Activated CD8-positive, alpha-beta T cell treated with anti-CD3 and anti-CD28 coated beads for 36 hours (primary cell): ENCODE measurements at regions of chr3 and their contacts with region 1.

Region 1: GRCh38 chr3:187150599-187150998 is 11.3 kb upstream of the RPL39L start:
- DNase-seq: peak; percentile 85
- ATAC-seq: peak; percentile 86
- H3K4me3 Mint-ChIP-seq: no peak overlapping the region
- H3K27ac Mint-ChIP-seq: no peak overlapping the region
- H3K4me1 Mint-ChIP-seq: no peaks in the 10 kb centered on the region
- H3K27me3 Mint-ChIP-seq: no peaks in the 10 kb centered on the region
- CTCF ChIP-seq: peak; percentile 55

Region 2: GRCh38 chr3:186849374-186849975 is 301.1 kb before region 1 on chr3:
- CTCF ChIA-PET with region 1: interaction called, 20 read pairs
- POLR2A ChIA-PET with region 1: no interaction called
- intact Hi-C with region 1: no loop called
- DNase-seq: peak; percentile 32
- ATAC-seq: peak; percentile 95
- H3K4me3 Mint-ChIP-seq: no peak overlapping the region
- H3K27ac Mint-ChIP-seq: no peak overlapping the region
- H3K4me1 Mint-ChIP-seq: peaks cover 8% of the 10 kb centered on the region
- H3K27me3 Mint-ChIP-seq: peaks cover 9% of the 10 kb centered on the region
- CTCF ChIP-seq: peak; percentile 47

Region 3: GRCh38 chr3:187112934-187113793 is 37.4 kb before region 1 on chr3:
- CTCF ChIA-PET with region 1: interaction called, 116 read pairs
- POLR2A ChIA-PET with region 1: interaction called, 7 read pairs
- intact Hi-C with region 1: loop called (anchors 5 kb)
- DNase-seq: no peak
- ATAC-seq: peak; percentile 66
- H3K4me3 Mint-ChIP-seq: no peak overlapping the region
- H3K27ac Mint-ChIP-seq: no peak overlapping the region
- H3K4me1 Mint-ChIP-seq: peaks cover 7% of the 10 kb centered on the region
- H3K27me3 Mint-ChIP-seq: no peaks in the 10 kb centered on the region
- CTCF ChIP-seq: peak; percentile 80

Region 4: GRCh38 chr3:187125319-187126031 is 25.1 kb before region 1 on chr3:
- CTCF ChIA-PET with region 1: interaction called, 14 read pairs
- POLR2A ChIA-PET with region 1: no interaction called
- intact Hi-C with region 1: no loop called
- DNase-seq: no peak
- ATAC-seq: no peak
- H3K4me3 Mint-ChIP-seq: no peak overlapping the region
- H3K27ac Mint-ChIP-seq: no peak overlapping the region
- H3K4me1 Mint-ChIP-seq: peaks cover 21% of the 10 kb centered on the region
- H3K27me3 Mint-ChIP-seq: no peaks in the 10 kb centered on the region
- CTCF ChIP-seq: no peak

Region 5: GRCh38 chr3:187139126-187139894 is 11.3 kb before region 1 on chr3 and contains the start of gene RPL39L:
- CTCF ChIA-PET with region 1: interaction called, 79 read pairs
- POLR2A ChIA-PET with region 1: interaction called, 6 read pairs
- intact Hi-C with region 1: no loop called
- DNase-seq: peak; percentile 96
- ATAC-seq: peak; percentile 96
- H3K4me3 Mint-ChIP-seq: peak within 1 kb of the TSS; percentile 83
- H3K27ac Mint-ChIP-seq: peak within 1 kb of the TSS; percentile 97
- H3K4me1 Mint-ChIP-seq: peaks cover 19% of the 10 kb centered on the region
- H3K27me3 Mint-ChIP-seq: no peaks in the 10 kb centered on the region
- CTCF ChIP-seq: peak; percentile 97
- total RNA-seq, gene RPL39L: 12.1 to 16.2 TPM

Region 6: DNA sequence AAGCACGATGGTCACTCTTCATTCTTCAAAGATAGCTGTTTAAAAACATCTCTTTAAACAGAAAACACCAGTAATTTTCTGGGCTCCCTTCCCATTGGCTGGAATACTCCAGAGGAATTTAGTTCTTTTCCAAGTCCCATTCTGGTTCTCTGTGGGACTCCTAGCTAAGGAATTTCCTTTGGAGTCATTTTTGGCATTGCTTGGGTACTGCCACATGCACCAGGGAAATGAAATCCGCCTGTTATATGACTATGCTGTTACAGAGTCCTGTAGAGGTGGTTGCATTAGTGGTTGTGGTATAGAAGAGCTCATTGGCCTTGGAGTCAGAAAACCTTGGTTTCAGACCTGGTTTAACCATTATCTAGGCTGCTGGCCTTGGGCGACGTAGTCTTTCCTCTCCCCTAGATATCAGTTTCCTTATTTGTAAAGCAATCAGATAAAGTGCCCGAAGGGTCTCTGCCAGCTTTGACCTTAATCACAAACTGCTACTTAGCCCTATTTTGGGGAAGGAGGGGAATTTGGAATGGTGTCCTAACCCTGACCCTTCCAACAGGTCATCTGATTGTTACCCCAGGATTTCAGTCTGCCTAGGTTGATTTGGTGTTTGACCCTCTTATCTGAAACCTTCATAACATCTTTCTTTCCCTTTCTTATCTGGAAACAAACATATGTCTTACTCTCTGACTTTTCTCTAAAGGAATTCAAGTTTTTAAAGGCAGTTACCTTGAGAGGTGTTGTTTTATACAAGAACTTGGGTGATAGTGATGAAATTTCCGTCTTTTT is 60.1 kb after region 1 on chr3:
- CTCF ChIA-PET with region 1: no interaction called
- POLR2A ChIA-PET with region 1: no interaction called
- intact Hi-C with region 1: no loop called
- DNase-seq: no peak
- ATAC-seq: no peak
- H3K4me3 Mint-ChIP-seq: no peak overlapping the region
- H3K27ac Mint-ChIP-seq: no peak overlapping the region
- H3K4me1 Mint-ChIP-seq: no peaks in the 10 kb centered on the region
- H3K27me3 Mint-ChIP-seq: peaks cover 4% of the 10 kb centered on the region
- CTCF ChIP-seq: no peak